Activated CD4-positive, alpha-beta T cell treated with anti-CD3 and anti-CD28 coated beads for 36 hours (primary cell): ENCODE measurements at regions of chr2 and their contacts with region 1.

Region 1: DNA sequence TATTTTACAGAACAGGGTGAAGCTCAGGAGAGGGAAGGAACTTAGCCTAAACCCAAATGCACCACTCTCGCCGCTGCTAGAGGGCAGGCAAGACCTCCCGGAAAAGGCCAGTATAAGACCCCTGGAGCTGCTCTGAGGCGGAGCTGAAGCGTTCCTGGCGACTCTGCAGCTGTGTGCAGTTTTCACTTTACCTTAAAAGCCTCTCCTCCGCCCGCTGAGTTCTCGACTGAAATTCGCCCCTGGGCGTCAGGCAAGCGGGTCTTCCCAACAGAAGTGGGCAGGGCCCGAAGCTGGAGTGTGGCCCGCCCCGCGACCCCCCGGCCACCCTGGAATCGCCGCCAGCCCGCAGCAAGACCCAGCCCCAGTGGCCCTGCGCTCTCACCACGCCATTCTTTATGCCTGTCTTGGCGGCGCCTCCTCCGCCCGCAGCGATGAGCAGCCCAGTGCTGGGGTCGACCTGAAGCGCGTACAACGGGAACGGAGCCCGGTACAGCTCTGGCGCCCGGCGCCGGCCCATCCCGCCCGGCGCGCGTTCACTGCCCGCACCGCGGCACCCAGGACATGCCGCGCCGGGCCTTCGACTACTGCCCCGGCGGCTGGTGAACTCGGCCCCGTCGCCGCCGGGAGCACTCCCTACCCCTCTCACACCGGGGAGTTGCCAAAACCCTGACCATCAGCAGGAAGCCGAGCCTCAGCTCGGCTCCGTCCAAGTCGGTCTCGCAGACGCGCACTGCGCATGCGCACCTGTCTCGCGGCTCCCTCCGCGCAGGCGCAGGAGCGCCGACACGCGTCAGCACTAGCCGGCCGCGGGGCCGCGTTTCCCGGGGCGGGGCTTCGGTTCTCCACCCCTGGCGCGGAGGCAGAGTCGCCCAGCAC is at the start of gene PREB:
- DNase-seq: peak; percentile 99
- ATAC-seq: peak; percentile 97
- H3K4me3 Mint-ChIP-seq: peak within 1 kb of the TSS; percentile 81
- H3K27ac Mint-ChIP-seq: peak within 1 kb of the TSS; percentile 94
- H3K4me1 Mint-ChIP-seq: peaks cover 16% of the 10 kb centered on the region
- H3K27me3 Mint-ChIP-seq: no peaks in the 10 kb centered on the region
- total RNA-seq, gene PREB: 59.7 to 59.9 TPM

Region 2: DNA sequence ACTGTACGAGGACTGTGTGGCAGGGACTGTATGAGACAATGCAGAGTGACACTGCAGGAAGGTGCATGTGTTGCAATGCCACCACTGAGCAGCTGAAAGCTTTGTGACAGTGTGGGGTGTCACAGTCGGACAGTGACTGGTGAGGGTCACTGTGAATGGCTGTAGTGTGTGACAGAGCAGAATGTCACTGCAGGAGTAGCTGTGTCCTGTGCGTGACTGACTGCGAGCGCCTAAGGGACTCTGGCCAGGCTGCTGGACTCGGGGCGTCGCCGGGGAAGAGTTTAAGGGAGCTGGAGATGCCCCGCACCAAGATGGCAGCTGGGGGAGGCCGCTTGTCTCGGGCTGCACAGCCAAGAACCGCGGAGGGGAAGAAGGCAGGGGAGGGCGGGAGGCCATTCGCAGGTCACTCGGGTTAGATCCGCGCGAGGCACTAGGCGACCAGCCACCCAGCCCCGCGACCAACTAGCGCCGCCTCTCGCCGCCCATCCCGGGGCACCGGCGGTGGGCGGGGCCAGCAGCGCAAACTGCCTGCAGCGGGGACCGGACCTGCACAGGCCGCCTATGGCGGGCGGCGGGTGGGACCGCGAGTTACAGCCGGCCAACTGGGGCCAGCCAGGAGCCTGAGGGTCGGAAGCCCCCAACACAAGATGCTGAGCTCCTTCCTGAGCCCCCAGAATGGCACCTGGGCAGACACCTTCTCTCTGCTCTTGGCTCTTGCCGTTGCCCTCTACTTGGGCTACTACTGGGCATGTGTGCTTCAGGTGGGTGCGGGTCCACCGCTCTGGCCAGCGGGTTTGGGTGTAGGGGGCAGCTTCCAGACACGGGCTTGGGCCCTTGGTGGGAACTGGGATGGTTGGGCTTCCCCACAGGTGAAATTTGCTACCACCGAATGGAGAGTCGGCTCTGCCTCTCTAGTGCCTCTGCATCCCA is 10.6 kb before region 1 on chr2 and contains the start of gene ABHD1:
- CTCF ChIA-PET with region 1: interaction called, 15 read pairs
- POLR2A ChIA-PET with region 1: interaction called, 7 read pairs
- intact Hi-C with region 1: loop called in 1 of 2 experiments (anchors 1 kb)
- DNase-seq: peak; percentile 72
- ATAC-seq: peak; percentile 79
- H3K4me3 Mint-ChIP-seq: peak within 1 kb of the TSS; percentile 73
- H3K27ac Mint-ChIP-seq: peak within 1 kb of the TSS; percentile 74
- H3K4me1 Mint-ChIP-seq: peaks cover 16% of the 10 kb centered on the region
- H3K27me3 Mint-ChIP-seq: peaks cover 15% of the 10 kb centered on the region
- total RNA-seq, gene ABHD1: 0.39 to 0.65 TPM

Region 3: GRCh38 chr2:27241761-27242613 is 107.8 kb after region 1 on chr2:
- CTCF ChIA-PET with region 1: no interaction called
- POLR2A ChIA-PET with region 1: no interaction called
- intact Hi-C with region 1: no loop called
- DNase-seq: no peak
- ATAC-seq: no peak
- H3K4me3 Mint-ChIP-seq: no peak overlapping the region
- H3K27ac Mint-ChIP-seq: no peak overlapping the region
- H3K4me1 Mint-ChIP-seq: no peaks in the 10 kb centered on the region
- H3K27me3 Mint-ChIP-seq: no peaks in the 10 kb centered on the region